ENCODE measurements at regions of chr7 and their contacts with region 1.

Region 1: GRCh38 chr7:14691597-14692203 is 210.9 kb downstream of the DGKB start:
- DNase-seq: peak; percentile 1 to 65 (median 47)
- ATAC-seq: no peak
- H3K4me3 ChIP-seq: no peak overlapping the region
- H3K4me3 Mint-ChIP-seq: no peak overlapping the region
- H3K27ac ChIP-seq: no peak overlapping the region
- H3K27ac Mint-ChIP-seq: no peak overlapping the region
- H3K4me1 ChIP-seq: no peaks in the 10 kb centered on the region
- H3K4me1 Mint-ChIP-seq: no peaks in the 10 kb centered on the region
- H3K27me3 ChIP-seq: no peaks in the 10 kb centered on the region
- H3K27me3 Mint-ChIP-seq: no peaks in the 10 kb centered on the region
- CTCF ChIP-seq: peak; percentile 84

Region 2: GRCh38 chr7:14673202-14673601 is 18.5 kb before region 1 on chr7:
- CTCF ChIA-PET with region 1: interaction called, 16 read pairs
- POLR2A ChIA-PET with region 1: no interaction called
- intact Hi-C with region 1: no loop called
- DNase-seq: no peak
- ATAC-seq: no peak
- H3K4me3 ChIP-seq: no peak overlapping the region
- H3K4me3 Mint-ChIP-seq: no peak overlapping the region
- H3K27ac ChIP-seq: no peak overlapping the region
- H3K27ac Mint-ChIP-seq: no peak overlapping the region
- H3K4me1 ChIP-seq: no peaks in the 10 kb centered on the region
- H3K4me1 Mint-ChIP-seq: no peaks in the 10 kb centered on the region
- H3K27me3 ChIP-seq: no peaks in the 10 kb centered on the region
- H3K27me3 Mint-ChIP-seq: no peaks in the 10 kb centered on the region
- CTCF ChIP-seq: no peak